ENCODE measurements at regions of chr10 and their contacts with region 1.

Region 1: GRCh38 chr10:72331601-72332422 is 22.9 kb downstream of the DNAJB12 start:
- DNase-seq: peak; percentile 91
- H3K4me3 ChIP-seq: no peak overlapping the region
- H3K27ac ChIP-seq: peak overlapping the region; percentile 80
- H3K4me1 ChIP-seq: peaks cover 38% of the 10 kb centered on the region
- H3K27me3 ChIP-seq: no peaks in the 10 kb centered on the region
- CTCF ChIP-seq: no peak

Region 2: DNA sequence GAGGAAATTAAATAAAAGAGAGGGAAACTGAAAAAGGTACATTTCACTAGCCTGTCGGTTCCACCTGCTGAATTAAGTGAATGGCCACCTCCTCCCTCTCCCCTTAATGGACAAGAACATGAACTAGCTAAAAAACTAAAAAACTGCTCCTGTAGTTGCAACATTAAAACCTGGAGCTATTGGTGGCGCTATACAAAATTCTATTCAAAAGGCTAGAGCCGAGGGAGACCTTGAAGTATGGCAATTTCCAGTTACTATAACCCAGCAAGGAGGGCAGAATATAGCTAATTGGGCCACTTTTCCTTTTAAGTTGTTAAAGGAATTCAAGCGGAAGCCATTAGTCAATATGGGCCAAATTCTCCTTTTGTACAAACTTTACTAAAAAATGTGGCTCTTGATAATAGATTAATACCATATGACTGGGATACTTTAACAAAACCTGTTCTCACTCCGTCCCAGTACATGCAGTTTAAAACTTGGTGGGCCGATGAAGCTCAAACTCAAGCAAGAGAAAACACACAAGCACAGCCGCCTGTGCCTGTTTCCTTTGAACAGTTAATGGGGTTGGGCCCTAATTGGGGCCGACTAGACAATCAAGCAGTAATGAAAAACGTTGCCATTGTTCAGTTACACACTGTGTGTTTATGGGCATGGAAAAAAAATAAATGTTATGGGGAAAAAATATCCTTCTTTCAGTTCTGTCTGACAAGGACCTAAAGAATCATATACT is 374.1 kb before region 1 on chr10:
- CTCF ChIA-PET with region 1: no interaction called
- POLR2A ChIA-PET with region 1: no interaction called
- intact Hi-C with region 1: loop called (anchors 5 kb)
- DNase-seq: peak; percentile 37
- H3K4me3 ChIP-seq: no peak overlapping the region
- H3K27ac ChIP-seq: no peak overlapping the region
- H3K4me1 ChIP-seq: no peaks in the 10 kb centered on the region
- H3K27me3 ChIP-seq: no peaks in the 10 kb centered on the region
- CTCF ChIP-seq: peak; percentile 41; the same call in 1 of the 2 replicates

Region 3: DNA sequence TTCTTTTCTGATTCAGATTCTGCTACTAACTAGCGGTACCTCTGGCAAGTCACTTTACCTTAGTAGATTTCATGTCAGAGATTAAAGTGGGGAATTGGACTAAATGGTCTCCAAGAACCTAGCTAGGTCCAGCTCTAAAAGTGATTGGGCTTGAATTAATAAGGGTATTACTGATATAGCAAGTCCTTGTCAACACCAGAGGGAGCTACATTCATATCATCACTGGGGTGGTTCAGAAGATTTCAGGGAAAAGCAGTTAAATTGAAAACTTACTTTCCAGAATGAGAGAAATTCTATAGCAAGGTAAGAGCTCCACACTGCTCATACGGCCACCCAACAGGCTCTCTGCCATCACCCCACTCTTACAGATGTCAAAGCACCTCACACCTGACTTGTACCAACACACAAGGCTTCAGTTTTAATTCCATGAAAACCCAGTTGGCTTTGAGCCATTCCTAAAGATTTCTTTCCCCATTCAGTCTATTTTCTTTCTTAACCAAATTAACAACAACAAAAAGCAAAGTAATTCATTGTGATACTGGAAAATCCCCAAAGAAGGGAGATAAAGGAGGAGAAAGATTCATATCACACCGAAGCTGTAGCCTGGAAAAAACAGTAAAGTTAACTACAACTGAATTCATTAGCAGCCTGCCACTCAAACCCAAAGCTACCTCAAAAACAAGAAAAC is 205.5 kb before region 1 on chr10:
- CTCF ChIA-PET with region 1: no interaction called
- POLR2A ChIA-PET with region 1: no interaction called
- intact Hi-C with region 1: loop called (anchors 2 kb)
- DNase-seq: peak; percentile 63
- H3K4me3 ChIP-seq: no peak overlapping the region
- H3K27ac ChIP-seq: no peak overlapping the region
- H3K4me1 ChIP-seq: peaks cover 5% of the 10 kb centered on the region
- H3K27me3 ChIP-seq: no peaks in the 10 kb centered on the region
- CTCF ChIP-seq: peak; percentile 66

Region 4: GRCh38 chr10:72267819-72268399 is 63.9 kb before region 1 on chr10:
- CTCF ChIA-PET with region 1: no interaction called
- POLR2A ChIA-PET with region 1: no interaction called
- intact Hi-C with region 1: no loop called
- DNase-seq: no peak
- H3K4me3 ChIP-seq: no peak overlapping the region
- H3K27ac ChIP-seq: peak overlapping the region; percentile 47
- H3K4me1 ChIP-seq: peaks cover 16% of the 10 kb centered on the region
- H3K27me3 ChIP-seq: no peaks in the 10 kb centered on the region
- CTCF ChIP-seq: no peak

Region 5: DNA sequence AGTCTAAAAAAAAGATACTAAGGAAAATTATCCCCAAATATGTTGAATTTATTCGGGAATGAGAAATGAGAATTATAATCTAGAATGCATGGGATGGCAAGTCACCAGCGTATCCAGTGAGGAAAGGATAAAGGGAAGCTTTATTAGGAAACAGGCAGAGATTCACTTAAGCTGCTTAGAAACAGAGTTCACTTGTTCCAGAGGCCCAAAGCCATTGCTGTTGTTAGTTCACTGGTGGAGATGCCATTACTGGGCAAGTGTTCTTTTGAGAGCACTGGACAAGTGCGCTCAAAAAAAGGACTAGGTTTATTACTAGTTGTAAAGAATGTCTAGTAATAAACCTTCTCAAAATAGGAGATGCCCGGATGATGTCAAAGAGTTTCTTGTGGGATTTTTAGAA is 242.8 kb after region 1 on chr10:
- CTCF ChIA-PET with region 1: no interaction called
- POLR2A ChIA-PET with region 1: no interaction called
- intact Hi-C with region 1: no loop called
- DNase-seq: no peak
- H3K4me3 ChIP-seq: no peak overlapping the region
- H3K27ac ChIP-seq: no peak overlapping the region
- H3K4me1 ChIP-seq: no peaks in the 10 kb centered on the region
- H3K27me3 ChIP-seq: no peaks in the 10 kb centered on the region
- CTCF ChIP-seq: no peak